Heart left ventricle (tissue), 16 donors: ENCODE measurements at regions of chr6 and their contacts with region 1.

Region 1: GRCh38 chr6:137866914-137867684 is at the start of gene TNFAIP3:
- DNase-seq: peak; percentile 91 to 96 (median 94)
- ATAC-seq: peak; percentile 88 to 96 (median 93)
- H3K4me3 ChIP-seq: peak within 1 kb of the TSS; percentile 64 to 98 (median 92)
- H3K27ac ChIP-seq: peak within 1 kb of the TSS; percentile 72 to 97 (median 86)
- H3K4me1 ChIP-seq: peaks cover 0 to 64% (median 19%) of the 10 kb centered on the region in 12 donors
- H3K27me3 ChIP-seq: no peaks in the 10 kb centered on the region
- CTCF ChIP-seq: peak; percentile 56 to 98 (median 87)
- POLR2A ChIP-seq: peak in 1 of 2 donors; percentile 68
- total RNA-seq, gene TNFAIP3: 3.2 to 33.7 (median 6.0) TPM

Region 2: GRCh38 chr6:137728385-137729349 is 138.4 kb before region 1 on chr6:
- intact Hi-C with region 1: loop called in 2 of 10 experiments (anchors 2 to 5 kb)
- DNase-seq: peak in 3 of 5 donors; percentile 32 to 44 (median 39)
- ATAC-seq: peak; percentile 66 to 90 (median 83)
- H3K4me3 ChIP-seq: peak overlapping the region in 1 of 12 donors; percentile 4
- H3K27ac ChIP-seq: peak overlapping the region in 10 of 12 donors; percentile 9 to 62 (median 40)
- H3K4me1 ChIP-seq: peaks cover 0 to 62% (median 2%) of the 10 kb centered on the region in 12 donors
- H3K27me3 ChIP-seq: no peaks in the 10 kb centered on the region
- CTCF ChIP-seq: no peak
- POLR2A ChIP-seq: no peak

Region 3: GRCh38 chr6:137799950-137800568 is 67.0 kb before region 1 on chr6:
- intact Hi-C with region 1: loop called in 5 of 10 experiments (anchors 5 to 10 kb)
- DNase-seq: peak in 3 of 5 donors; percentile 29 to 48 (median 48)
- ATAC-seq: peak in 3 of 4 donors; percentile 42 to 54 (median 46)
- H3K4me3 ChIP-seq: no peak overlapping the region
- H3K27ac ChIP-seq: no peak overlapping the region
- H3K4me1 ChIP-seq: peaks cover 0 to 24% (median under 1%) of the 10 kb centered on the region in 12 donors
- H3K27me3 ChIP-seq: no peaks in the 10 kb centered on the region
- CTCF ChIP-seq: peak; percentile 19 to 66 (median 54)
- POLR2A ChIP-seq: no peak

Region 4: GRCh38 chr6:137944793-137945498 is 77.8 kb after region 1 on chr6:
- intact Hi-C with region 1: loop called in 8 of 10 experiments (anchors 2 to 5 kb)
- DNase-seq: no peak
- ATAC-seq: peak; percentile 59 to 88 (median 82)
- H3K4me3 ChIP-seq: peak overlapping the region in 1 of 12 donors; percentile 23
- H3K27ac ChIP-seq: no peak overlapping the region
- H3K4me1 ChIP-seq: peaks cover 0 to 16% (median 0%) of the 10 kb centered on the region in 12 donors
- H3K27me3 ChIP-seq: no peaks in the 10 kb centered on the region
- CTCF ChIP-seq: peak; percentile 63 to 88 (median 78)
- POLR2A ChIP-seq: no peak

Region 5: DNA sequence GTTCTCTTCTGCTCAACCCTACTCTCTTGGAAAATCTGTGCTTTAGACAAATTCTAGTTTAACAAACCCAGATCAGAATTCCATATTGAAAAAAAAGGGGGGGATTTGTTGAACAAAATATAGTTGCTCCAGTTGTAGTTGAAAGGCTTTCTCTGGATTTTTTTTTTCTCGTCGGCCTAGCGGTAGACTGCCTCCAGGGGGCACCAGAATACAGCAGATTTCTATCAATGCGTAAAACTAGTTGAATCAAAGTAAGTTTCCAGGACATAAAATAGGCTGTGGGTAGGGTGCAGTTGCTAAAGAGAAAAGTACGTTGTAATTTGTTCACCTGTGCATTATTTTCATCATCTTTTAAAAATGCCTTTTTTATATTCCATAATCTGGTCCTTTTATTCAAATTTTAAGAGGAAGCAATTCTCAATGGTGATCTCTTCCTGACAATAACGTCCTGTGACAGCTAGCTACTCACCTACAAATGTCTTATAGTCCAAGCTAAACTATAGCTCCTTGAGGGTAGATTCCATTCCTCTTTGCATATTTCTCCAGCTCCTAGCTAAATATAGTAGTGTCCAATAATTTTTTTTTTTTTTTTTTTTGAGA is 134.8 kb after region 1 on chr6:
- intact Hi-C with region 1: loop called in 1 of 10 experiments (anchors 5 kb)
- DNase-seq: peak in 4 of 5 donors; percentile 34 to 57 (median 35)
- ATAC-seq: peak in 1 of 4 donors; percentile 51
- H3K4me3 ChIP-seq: no peak overlapping the region
- H3K27ac ChIP-seq: no peak overlapping the region
- H3K4me1 ChIP-seq: no peaks in the 10 kb centered on the region
- H3K27me3 ChIP-seq: no peaks in the 10 kb centered on the region
- CTCF ChIP-seq: peak; percentile 73 to 90 (median 86)
- POLR2A ChIP-seq: no peak

Region 6: DNA sequence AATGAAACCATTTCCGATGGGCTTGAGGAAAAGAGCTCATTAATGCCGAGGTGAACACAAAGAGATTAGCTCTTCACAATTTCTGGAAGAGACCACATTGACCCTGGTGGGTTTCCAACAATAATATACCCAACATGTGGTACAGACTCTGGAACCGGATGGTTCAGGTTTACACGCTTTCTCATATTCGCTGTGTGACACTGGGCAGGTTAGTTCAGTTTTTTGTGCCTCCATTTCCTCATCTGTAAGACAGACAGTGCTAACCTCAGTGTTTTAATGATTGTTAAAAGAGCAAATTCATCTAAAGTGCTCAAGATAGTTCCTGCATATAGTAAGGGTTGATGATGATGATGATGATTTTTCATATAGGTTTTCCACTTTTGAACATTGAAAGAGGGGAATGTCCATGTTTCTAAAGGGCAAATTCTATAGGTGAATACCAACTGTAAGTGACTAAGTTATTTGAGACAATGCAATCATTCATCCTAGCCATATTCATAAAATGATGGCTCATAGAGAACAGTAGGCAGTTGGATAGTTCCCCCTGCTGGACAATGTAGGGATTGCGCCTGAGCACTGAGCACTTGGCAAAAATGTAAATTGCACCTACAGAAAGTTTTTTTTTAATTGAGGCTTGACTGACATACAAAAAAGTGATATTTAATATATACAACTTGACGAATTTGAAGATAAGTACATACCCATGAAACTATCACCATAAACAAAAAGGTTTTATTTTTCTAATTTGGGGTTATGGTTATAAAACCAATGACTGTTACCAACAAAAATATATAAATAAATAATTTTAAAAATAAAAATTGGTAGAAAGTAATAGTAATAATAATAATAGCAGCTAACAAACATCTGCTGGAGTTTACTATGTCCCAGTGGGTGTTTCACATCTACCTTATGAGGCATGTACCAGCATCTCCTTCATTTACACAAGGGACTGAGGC is 242.2 kb after region 1 on chr6:
- intact Hi-C with region 1: loop called in 2 of 10 experiments (anchors 5 kb)
- DNase-seq: peak in 4 of 5 donors; percentile 44 to 57 (median 50)
- ATAC-seq: peak in 1 of 4 donors; percentile 32
- H3K4me3 ChIP-seq: no peak overlapping the region
- H3K27ac ChIP-seq: no peak overlapping the region
- H3K4me1 ChIP-seq: peaks cover 0 to 19% (median 6%) of the 10 kb centered on the region in 12 donors
- H3K27me3 ChIP-seq: peaks cover 0 to 38% (median 5%) of the 10 kb centered on the region in 9 donors
- CTCF ChIP-seq: peak; percentile 91 to 99 (median 96)
- POLR2A ChIP-seq: no peak